ENCODE measurements at regions of chr14 and their contacts with region 1.

Region 1: GRCh38 chr14:74267588-74267987 is 28.3 kb downstream of the VSX2 start:
- DNase-seq: no peak
- H3K4me3 ChIP-seq: no peak overlapping the region
- H3K27ac ChIP-seq: no peak overlapping the region
- H3K4me1 ChIP-seq: peaks cover 0 to 3% (median 1%) of the 10 kb centered on the region in 4 experiments; a peak in 2 of 7 replicates
- H3K27me3 ChIP-seq: no peaks in the 10 kb centered on the region; a peak in 1 of 7 replicates
- CTCF ChIP-seq: no peak
- EP300 ChIP-seq: no peak
- POLR2A ChIP-seq: no peak
- RAD21 ChIP-seq: no peak

Region 2: DNA sequence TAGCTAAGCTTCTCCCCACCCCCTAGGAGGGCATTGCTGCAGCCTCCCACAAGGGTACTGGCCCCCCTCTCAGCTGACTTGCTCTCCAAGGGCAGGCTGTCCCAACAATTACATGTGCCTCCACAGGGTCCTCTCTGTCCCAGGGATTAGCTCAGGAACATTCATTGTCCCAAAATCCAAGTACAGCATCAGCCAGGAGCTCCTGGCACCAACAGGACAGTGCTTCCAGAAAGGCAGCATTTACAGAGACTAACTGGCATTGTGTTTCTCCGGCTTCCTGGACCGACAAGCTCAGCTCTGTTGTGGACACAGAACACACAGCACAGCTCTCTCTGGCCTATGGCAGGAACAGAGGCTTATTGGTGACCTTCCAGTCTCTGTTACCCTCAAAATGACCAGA is 13.5 kb after region 1 on chr14:
- CTCF ChIA-PET with region 1: interaction called, 13 read pairs
- POLR2A ChIA-PET with region 1: interaction called, 40 read pairs
- DNase-seq: no peak
- H3K4me3 ChIP-seq: no peak overlapping the region
- H3K27ac ChIP-seq: no peak overlapping the region
- H3K4me1 ChIP-seq: no peaks in the 10 kb centered on the region
- H3K27me3 ChIP-seq: no peaks in the 10 kb centered on the region; a peak in 1 of 7 replicates
- CTCF ChIP-seq: no peak
- EP300 ChIP-seq: no peak
- POLR2A ChIP-seq: no peak
- RAD21 ChIP-seq: no peak